Breast epithelium (tissue), 4 donors: ENCODE measurements at regions of chr1 and their contacts with region 1.

Region 1: DNA sequence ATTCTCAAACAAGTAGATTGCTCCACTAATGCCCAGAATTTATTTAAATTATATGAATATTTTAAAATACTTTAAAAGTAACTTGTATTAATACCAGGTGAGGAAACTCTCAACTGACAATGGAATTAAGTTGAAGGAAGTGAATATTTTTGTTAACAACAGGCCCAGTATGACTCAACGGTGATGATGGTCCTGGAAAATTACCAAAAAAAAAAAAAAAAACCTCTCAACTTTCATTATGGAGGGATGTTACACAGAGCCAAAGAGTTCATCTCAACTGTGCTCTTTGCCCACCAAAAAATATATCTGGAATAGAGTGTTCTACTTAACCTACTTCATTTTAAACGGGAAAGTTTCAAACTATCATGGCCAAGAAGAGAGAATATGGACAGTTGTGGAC is 28.3 kb downstream of the CFH start:
- DNase-seq: no peak
- H3K4me3 ChIP-seq: no peak overlapping the region
- H3K27ac ChIP-seq: no peak overlapping the region
- H3K4me1 ChIP-seq: no peaks in the 10 kb centered on the region
- H3K27me3 ChIP-seq: no peaks in the 10 kb centered on the region
- CTCF ChIP-seq: no peak
- POLR2A ChIP-seq: no peak

Region 2: DNA sequence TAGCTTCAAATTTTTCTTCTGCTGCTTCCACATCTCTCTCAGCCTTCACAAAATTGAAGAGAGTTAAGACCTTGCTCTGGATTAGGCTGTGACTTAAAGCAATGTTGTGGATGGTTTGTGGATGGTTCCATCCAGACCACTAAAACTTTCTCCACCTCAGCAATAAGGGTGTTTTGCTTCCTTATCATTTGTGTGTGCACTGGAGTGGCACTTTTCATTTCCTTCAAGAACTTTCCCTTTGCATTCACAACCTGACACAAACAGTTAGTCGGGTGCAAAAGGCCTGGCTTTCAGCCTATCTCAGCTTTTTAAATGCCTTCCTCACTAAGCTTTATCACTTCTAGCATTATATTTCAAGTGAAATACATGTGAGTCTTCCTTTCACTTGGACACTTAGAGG is 1064.9 kb after region 1 on chr1:
- intact Hi-C with region 1: loop called (anchors 10 kb)
- DNase-seq: no peak
- H3K4me3 ChIP-seq: no peak overlapping the region
- H3K27ac ChIP-seq: no peak overlapping the region
- H3K4me1 ChIP-seq: no peaks in the 10 kb centered on the region
- H3K27me3 ChIP-seq: no peaks in the 10 kb centered on the region
- CTCF ChIP-seq: no peak
- POLR2A ChIP-seq: no peak